ENCODE measurements at regions of chr1 and their contacts with region 1.

Region 1: DNA sequence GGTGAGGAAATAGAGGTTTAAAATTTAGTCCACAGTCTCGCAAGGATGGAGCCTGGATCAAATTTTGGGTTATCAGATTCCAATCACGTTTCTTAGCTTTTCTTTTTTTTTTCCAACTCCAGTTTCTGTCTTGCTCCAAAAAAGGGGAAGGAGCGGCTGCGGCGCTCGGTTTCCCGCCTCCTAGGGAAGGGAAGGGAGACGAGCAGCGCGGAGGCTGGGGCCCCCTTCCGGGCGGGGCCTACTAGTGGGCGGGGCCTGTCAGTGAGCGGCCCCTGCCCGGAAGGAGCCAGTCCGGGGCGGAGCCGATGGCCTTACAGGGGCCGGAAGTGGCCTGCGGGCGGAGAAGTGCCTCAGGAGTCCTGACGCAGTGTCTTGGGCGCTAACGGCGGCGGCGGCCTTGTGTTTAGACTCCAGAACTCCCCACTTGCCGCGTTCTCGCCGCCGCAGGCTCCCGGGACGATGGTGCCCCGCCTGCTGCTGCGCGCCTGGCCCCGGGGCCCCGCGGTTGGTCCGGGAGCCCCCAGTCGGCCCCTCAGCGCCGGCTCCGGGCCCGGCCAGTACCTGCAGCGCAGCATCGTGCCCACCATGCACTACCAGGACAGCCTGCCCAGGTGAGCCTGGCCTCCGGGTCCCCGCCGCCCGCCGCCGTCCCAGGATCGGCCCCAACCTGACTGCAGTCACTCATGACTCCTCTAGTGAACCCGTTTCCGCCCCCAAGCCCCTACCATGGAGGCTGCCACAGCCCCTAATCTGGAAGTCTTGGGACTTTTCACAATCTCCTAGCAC is at the start of gene CPT2:
- DNase-seq: peak; percentile 95
- H3K4me3 Mint-ChIP-seq: peak within 1 kb of the TSS; percentile 97
- H3K27ac Mint-ChIP-seq: peak within 1 kb of the TSS; percentile 98
- H3K4me1 Mint-ChIP-seq: peaks cover 16% of the 10 kb centered on the region
- H3K27me3 Mint-ChIP-seq: no peaks in the 10 kb centered on the region
- total RNA-seq, gene CPT2: 19.6 to 20.7 TPM

Region 2: GRCh38 chr1:52702886-52703787 is 493.5 kb before region 1 on chr1:
- CTCF ChIA-PET with region 1: no interaction called
- POLR2A ChIA-PET with region 1: no interaction called
- intact Hi-C with region 1: loop called (anchors 5 kb)
- DNase-seq: peak; percentile 91
- H3K4me3 Mint-ChIP-seq: peak overlapping the region; percentile 90
- H3K27ac Mint-ChIP-seq: peak overlapping the region; percentile 94
- H3K4me1 Mint-ChIP-seq: peaks cover 22% of the 10 kb centered on the region
- H3K27me3 Mint-ChIP-seq: no peaks in the 10 kb centered on the region

Region 3: DNA sequence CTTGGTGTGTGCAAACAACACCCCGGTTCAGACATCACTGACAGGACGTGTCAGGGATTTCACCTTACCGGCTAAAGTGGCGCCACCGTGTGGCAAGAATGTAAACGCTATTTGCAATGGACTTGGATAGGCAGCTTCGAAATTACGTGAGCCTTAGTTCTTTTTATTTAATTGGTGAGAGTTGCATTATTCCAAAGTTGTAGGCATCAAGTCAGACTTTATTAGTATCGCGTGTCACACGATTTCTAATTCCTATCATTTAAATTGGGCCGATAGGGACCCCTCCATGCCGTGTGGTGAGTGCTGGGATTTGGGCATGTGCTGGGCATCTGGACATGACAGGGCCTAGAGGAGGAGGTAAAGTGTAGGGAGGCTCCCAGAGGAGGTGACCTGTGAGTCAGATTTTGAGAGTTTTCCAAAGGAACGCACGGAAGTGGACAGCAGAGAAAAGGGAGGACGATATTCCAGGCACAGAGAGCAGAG is 14.5 kb before region 1 on chr1:
- CTCF ChIA-PET with region 1: interaction called, 40 read pairs
- POLR2A ChIA-PET with region 1: no interaction called
- intact Hi-C with region 1: no loop called
- DNase-seq: peak; percentile 89
- H3K4me3 Mint-ChIP-seq: no peak overlapping the region
- H3K27ac Mint-ChIP-seq: no peak overlapping the region
- H3K4me1 Mint-ChIP-seq: no peaks in the 10 kb centered on the region
- H3K27me3 Mint-ChIP-seq: peaks cover 11% of the 10 kb centered on the region

Region 4: GRCh38 chr1:53238197-53239155 is 41.8 kb after region 1 on chr1 and contains the start of gene MAGOH:
- CTCF ChIA-PET with region 1: no interaction called
- POLR2A ChIA-PET with region 1: no interaction called
- intact Hi-C with region 1: loop called (anchors 1 kb)
- DNase-seq: peak; percentile 97
- H3K4me3 Mint-ChIP-seq: peak within 1 kb of the TSS; percentile 97
- H3K27ac Mint-ChIP-seq: peak within 1 kb of the TSS; percentile 85
- H3K4me1 Mint-ChIP-seq: peaks cover 26% of the 10 kb centered on the region
- H3K27me3 Mint-ChIP-seq: no peaks in the 10 kb centered on the region
- total RNA-seq, gene MAGOH: 85.7 to 89.5 TPM

Region 5: GRCh38 chr1:53393325-53393792 is 196.7 kb after region 1 on chr1:
- CTCF ChIA-PET with region 1: no interaction called
- POLR2A ChIA-PET with region 1: no interaction called
- intact Hi-C with region 1: no loop called
- DNase-seq: peak; percentile 80
- H3K4me3 Mint-ChIP-seq: no peak overlapping the region
- H3K27ac Mint-ChIP-seq: no peak overlapping the region
- H3K4me1 Mint-ChIP-seq: peaks cover 2% of the 10 kb centered on the region
- H3K27me3 Mint-ChIP-seq: no peaks in the 10 kb centered on the region

Region 6: DNA sequence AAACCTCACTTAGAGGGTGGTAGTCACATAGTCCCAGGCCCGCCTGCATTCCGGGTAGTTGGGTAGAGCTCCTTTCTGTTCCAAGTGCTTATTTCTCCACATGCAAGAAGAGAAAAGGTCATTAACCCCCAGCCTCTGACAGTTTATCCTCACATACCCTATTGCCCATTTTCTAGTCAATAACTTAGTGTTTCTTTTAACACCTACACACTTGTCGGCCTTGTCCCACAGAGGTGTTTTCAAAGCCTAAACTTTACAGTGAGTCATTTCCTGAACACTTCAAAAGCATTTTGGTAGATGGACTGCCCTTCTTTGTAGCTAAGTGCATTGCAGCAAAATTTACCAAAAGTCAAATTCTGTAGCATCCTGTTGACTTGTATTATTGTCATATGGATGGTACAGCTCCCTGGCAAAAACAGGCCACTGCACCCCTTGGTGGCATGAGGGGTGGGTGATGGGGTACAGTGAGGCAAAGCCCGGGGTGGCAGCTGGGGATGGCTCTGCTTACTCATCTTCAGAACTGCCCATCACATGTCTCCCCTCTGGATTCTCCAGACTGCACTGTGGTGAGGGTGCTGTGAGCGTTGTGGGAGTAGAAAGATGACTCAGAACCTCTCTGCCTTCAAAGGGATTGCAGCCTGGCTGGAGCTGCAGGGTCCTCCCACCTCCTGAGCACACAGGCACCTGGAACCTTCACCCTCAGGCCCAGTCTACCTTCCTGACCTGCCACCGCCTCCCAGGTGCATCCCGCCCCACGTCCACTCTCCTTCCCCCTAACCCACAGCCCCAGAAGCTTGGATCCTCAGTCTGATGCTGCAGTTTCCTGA is 216.7 kb after region 1 on chr1:
- CTCF ChIA-PET with region 1: no interaction called
- POLR2A ChIA-PET with region 1: no interaction called
- intact Hi-C with region 1: loop called (anchors 2 kb)
- DNase-seq: peak; percentile 82
- H3K4me3 Mint-ChIP-seq: peak overlapping the region; percentile 40
- H3K27ac Mint-ChIP-seq: peak overlapping the region; percentile 89
- H3K4me1 Mint-ChIP-seq: peaks cover 64% of the 10 kb centered on the region
- H3K27me3 Mint-ChIP-seq: no peaks in the 10 kb centered on the region